Prostate gland (tissue), 2 donors: ENCODE measurements at regions of chr16 and their contacts with region 1.

Region 1: GRCh38 chr16:57576429-57576870 is 34.0 kb downstream of the ADGRG5 start:
- DNase-seq: peak; percentile 67
- H3K4me3 ChIP-seq: no peak overlapping the region
- H3K27ac ChIP-seq: no peak overlapping the region
- H3K4me1 ChIP-seq: no peaks in the 10 kb centered on the region
- H3K27me3 ChIP-seq: no peaks in the 10 kb centered on the region
- CTCF ChIP-seq: peak; percentile 56 to 88 (median 74)
- POLR2A ChIP-seq: no peak

Region 2: GRCh38 chr16:57314161-57314785 is 262.2 kb before region 1 on chr16:
- intact Hi-C with region 1: no loop called
- DNase-seq: no peak
- H3K4me3 ChIP-seq: no peak overlapping the region
- H3K27ac ChIP-seq: peak overlapping the region; percentile 22 to 33
- H3K4me1 ChIP-seq: no peaks in the 10 kb centered on the region
- H3K27me3 ChIP-seq: no peaks in the 10 kb centered on the region
- CTCF ChIP-seq: no peak
- POLR2A ChIP-seq: no peak

Region 3: DNA sequence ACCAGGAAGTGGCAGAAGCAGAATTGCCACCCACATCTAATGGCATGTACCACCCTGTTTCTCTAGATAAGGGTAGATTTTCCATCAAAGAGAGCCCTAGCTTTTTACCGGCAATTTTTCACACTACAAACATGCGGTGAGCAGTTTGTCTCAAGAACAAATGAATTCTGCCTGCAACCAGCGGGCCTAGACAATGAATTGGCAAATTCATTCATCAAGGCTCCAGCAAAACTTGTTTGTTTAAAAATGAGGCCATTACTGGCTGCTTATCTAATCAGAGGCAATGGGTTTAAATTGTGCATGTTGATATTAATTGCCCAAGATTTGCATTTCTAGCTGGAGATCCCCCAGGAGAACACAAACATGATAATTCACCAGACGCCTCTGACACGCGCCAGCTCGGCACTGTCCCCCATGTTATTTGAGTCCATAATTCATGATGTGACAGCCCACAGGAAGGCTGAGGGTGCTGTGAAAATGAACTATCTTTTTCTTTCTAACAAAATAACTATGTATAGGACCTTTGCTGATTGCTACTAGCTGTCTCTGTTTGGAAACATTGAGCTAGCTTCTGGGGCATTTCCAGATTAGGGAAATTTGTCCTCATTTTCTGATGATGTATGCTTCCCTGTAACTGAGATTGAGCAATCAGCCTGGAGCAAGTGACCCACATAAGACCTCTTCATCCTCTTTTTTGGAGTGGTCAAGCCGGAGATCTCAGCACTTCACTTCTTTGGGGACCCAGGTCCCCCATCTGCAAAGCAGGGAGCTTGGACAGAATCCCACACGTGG is 313.7 kb after region 1 on chr16:
- intact Hi-C with region 1: loop called (anchors 10 kb)
- DNase-seq: no peak
- H3K4me3 ChIP-seq: no peak overlapping the region
- H3K27ac ChIP-seq: no peak overlapping the region
- H3K4me1 ChIP-seq: no peaks in the 10 kb centered on the region
- H3K27me3 ChIP-seq: no peaks in the 10 kb centered on the region
- CTCF ChIP-seq: no peak
- POLR2A ChIP-seq: no peak

Region 4: DNA sequence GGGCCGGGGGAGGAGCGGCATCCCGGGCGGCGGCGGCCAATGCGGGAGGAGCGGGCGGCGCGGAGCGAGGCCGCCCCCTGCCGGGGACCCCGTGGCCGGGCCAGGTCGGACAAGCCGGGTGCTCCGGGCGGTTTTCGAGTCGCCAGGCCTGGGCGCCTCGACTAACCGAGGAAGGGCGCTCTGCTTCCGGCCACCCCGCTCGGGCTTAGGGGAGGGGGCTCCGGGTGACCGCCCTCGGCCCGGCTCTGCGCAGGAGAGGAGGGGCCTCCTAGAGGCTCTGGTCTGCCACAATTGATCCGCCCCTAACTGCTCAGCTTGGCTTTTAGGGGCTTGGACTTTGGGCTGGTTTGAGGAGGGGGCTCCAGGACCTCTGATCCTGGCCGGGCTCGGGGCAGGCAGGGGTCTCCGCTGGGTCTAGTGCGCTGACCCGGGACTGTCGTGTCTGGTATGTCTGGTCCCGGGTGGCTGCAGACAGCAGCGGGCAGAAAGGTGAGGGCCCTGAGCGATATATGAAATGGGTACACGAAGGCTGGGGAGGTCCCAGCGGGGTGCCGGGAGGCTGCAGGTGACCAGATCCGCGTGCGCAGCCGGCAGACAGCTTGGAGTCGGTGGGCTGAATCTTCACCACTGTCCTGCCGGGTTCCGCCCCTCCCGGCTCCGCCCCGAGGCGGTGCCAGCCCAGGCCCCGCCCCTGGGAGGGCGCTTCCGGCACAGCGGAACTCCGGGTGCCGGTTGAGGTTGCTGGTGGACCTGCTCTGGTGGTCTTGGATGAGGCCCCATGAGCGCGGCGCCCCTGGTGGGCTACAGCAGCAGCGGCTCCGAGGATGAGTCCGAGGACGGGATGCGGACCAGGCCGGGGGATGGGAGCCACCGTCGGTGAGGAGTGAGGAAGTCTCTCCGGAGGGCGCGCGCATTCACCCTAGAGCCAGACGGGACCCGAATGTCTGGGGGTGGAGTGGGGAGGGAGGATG is 424.5 kb after region 1 on chr16 and contains the start of gene USB1:
- intact Hi-C with region 1: loop called (anchors 5 kb)
- DNase-seq: peak; percentile 83
- H3K4me3 ChIP-seq: peak within 1 kb of the TSS; percentile 71 to 82
- H3K27ac ChIP-seq: peak within 1 kb of the TSS; percentile 75 to 79
- H3K4me1 ChIP-seq: peaks cover 10% of the 10 kb centered on the region
- H3K27me3 ChIP-seq: no peaks in the 10 kb centered on the region
- CTCF ChIP-seq: peak; percentile 73 to 83 (median 80)
- POLR2A ChIP-seq: peak; percentile 65
- total RNA-seq, gene USB1: 22.6 to 74.1 TPM